Mammary epithelial cell (primary cell): ENCODE measurements at regions of chr1 and their contacts with region 1.

Region 1: GRCh38 chr1:37692078-37692833 is at the start of gene CDCA8:
- DNase-seq: peak; percentile 98
- H3K4me3 ChIP-seq: peak within 1 kb of the TSS; percentile 78 to 99 (median 80)
- H3K27ac ChIP-seq: peak within 1 kb of the TSS; percentile 89
- H3K4me1 ChIP-seq: peaks cover 22% of the 10 kb centered on the region
- H3K27me3 ChIP-seq: no peaks in the 10 kb centered on the region
- CTCF ChIP-seq: peak; percentile 37 to 74
- total RNA-seq, gene CDCA8: 1.0 to 30.0 TPM

Region 2: GRCh38 chr1:37479255-37480124 is 212.8 kb before region 1 on chr1:
- CTCF ChIA-PET with region 1: no interaction called
- dilution Hi-C with region 1: no loop called
- in situ Hi-C with region 1: loop called in 1 of 2 experiments (anchors 25 kb)
- intact Hi-C with region 1: loop called (anchors 5 kb)
- DNase-seq: peak; percentile 99
- H3K4me3 ChIP-seq: peak overlapping the region; percentile 84 to 87 (median 85)
- H3K27ac ChIP-seq: peak overlapping the region; percentile 96
- H3K4me1 ChIP-seq: peaks cover 62% of the 10 kb centered on the region
- H3K27me3 ChIP-seq: no peaks in the 10 kb centered on the region
- CTCF ChIP-seq: no peak

Region 3: GRCh38 chr1:37553927-37554808 is 138.1 kb before region 1 on chr1 and contains the start of gene SNIP1:
- CTCF ChIA-PET with region 1: no interaction called
- dilution Hi-C with region 1: no loop called
- in situ Hi-C with region 1: no loop called
- intact Hi-C with region 1: loop called (anchors 5 kb)
- DNase-seq: peak; percentile 88
- H3K4me3 ChIP-seq: peak within 1 kb of the TSS; percentile 93 to 97 (median 97)
- H3K27ac ChIP-seq: peak within 1 kb of the TSS; percentile 85
- H3K4me1 ChIP-seq: peaks cover 19% of the 10 kb centered on the region
- H3K27me3 ChIP-seq: no peaks in the 10 kb centered on the region
- CTCF ChIP-seq: no peak
- total RNA-seq, gene SNIP1: 22.5 to 23.0 TPM

Region 4: GRCh38 chr1:37765916-37766664 is 73.8 kb after region 1 on chr1:
- CTCF ChIA-PET with region 1: no interaction called
- dilution Hi-C with region 1: no loop called
- in situ Hi-C with region 1: no loop called
- intact Hi-C with region 1: loop called (anchors 1 kb)
- DNase-seq: no peak
- H3K4me3 ChIP-seq: no peak overlapping the region
- H3K27ac ChIP-seq: no peak overlapping the region
- H3K4me1 ChIP-seq: no peaks in the 10 kb centered on the region
- H3K27me3 ChIP-seq: peaks cover 19% of the 10 kb centered on the region
- CTCF ChIP-seq: peak in 1 of 2 donors; percentile 6

Region 5: GRCh38 chr1:37817481-37817880 is 125.2 kb after region 1 on chr1:
- CTCF ChIA-PET with region 1: no interaction called
- dilution Hi-C with region 1: no loop called
- in situ Hi-C with region 1: no loop called
- intact Hi-C with region 1: no loop called
- DNase-seq: no peak
- H3K4me3 ChIP-seq: no peak overlapping the region
- H3K27ac ChIP-seq: no peak overlapping the region
- H3K4me1 ChIP-seq: peaks cover 5% of the 10 kb centered on the region
- H3K27me3 ChIP-seq: no peaks in the 10 kb centered on the region
- CTCF ChIP-seq: no peak

Region 6: GRCh38 chr1:37859507-37860345 is 167.5 kb after region 1 on chr1 and contains the start of gene MTF1:
- CTCF ChIA-PET with region 1: interaction called, 3 read pairs
- dilution Hi-C with region 1: no loop called
- in situ Hi-C with region 1: no loop called
- intact Hi-C with region 1: loop called (anchors 1 kb)
- DNase-seq: peak; percentile 97
- H3K4me3 ChIP-seq: peak within 1 kb of the TSS; percentile 69 to 83 (median 78)
- H3K27ac ChIP-seq: peak within 1 kb of the TSS; percentile 89
- H3K4me1 ChIP-seq: peaks cover 29% of the 10 kb centered on the region
- H3K27me3 ChIP-seq: no peaks in the 10 kb centered on the region
- CTCF ChIP-seq: peak; percentile 62 to 93
- total RNA-seq, gene MTF1: 4.5 to 28.7 TPM